Posterior vena cava (tissue), 2 donors: ENCODE measurements at regions of chr10 and their contacts with region 1.

Region 1: DNA sequence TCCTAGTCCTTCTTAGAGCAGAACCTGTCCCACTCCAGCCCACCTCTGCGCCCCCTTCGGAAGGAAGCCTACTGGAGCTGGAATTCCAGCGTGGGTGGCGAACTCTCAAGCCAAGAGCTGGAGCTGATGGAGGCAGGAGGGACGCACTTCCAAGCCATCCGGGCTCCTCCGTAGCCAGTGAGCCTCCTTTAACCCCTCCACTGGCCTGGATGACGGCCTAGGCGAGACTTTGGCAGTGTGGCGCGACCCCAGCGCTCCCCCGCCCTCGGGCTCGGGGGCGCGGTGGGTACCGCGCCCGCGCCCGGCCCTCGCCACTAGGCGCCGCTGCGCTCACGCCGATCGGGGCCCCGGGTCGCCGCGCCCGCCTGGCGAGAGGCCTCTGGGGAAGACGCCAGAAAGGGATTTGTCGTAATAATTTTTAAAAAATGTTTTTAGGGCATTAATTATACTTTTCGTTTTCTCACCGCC is 5.1 kb upstream of the EMX2 start:
- DNase-seq: no peak

Region 2: GRCh38 chr10:117597216-117597615 is 59.7 kb after region 1 on chr10:
- intact Hi-C with region 1: no loop called
- DNase-seq: no peak

Region 3: DNA sequence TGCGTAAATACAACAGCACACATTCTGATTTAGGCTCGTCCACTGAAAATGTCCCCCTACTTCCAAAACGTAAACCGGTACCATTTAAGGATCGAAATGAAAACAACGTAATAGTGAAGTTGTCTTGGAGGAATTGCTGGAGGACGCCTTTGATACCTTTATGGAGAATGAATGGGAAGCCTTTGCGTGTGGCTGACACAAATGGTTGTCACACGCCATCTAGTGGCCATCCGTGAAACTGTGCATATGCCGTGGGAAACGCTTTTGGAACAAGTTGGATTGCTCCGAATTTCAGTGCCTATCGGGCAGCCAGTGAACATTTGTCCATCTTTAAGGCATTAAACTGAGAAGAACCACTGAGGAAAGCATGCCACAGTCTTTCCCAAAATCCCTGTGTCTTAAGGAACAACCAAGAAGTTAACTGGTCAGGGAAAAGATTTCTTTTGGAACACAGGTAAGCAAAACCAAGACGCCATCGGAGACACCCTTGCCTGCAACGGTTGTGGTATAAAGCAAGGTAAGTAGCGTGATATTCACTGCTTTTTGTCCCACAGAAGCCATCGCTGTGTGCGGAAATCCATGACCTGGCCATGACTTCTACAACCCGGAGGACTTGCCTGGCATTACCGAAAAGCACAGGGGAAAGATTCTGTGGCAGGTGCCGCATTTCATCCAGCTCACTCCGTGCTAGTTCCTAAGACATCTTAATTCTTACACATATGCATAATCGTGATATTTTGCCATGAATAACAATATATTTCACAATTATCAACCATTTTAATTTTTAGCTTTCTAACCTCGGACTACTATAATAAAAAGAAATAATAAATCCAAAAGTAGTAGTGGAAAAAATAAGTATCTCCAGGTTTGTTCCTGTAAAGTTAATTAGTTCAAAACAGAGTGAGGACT is 704.0 kb after region 1 on chr10:
- intact Hi-C with region 1: loop called (anchors 5 kb)
- DNase-seq: peak; percentile 88